ENCODE measurements at regions of chr9 and their contacts with region 1.

Region 1: DNA sequence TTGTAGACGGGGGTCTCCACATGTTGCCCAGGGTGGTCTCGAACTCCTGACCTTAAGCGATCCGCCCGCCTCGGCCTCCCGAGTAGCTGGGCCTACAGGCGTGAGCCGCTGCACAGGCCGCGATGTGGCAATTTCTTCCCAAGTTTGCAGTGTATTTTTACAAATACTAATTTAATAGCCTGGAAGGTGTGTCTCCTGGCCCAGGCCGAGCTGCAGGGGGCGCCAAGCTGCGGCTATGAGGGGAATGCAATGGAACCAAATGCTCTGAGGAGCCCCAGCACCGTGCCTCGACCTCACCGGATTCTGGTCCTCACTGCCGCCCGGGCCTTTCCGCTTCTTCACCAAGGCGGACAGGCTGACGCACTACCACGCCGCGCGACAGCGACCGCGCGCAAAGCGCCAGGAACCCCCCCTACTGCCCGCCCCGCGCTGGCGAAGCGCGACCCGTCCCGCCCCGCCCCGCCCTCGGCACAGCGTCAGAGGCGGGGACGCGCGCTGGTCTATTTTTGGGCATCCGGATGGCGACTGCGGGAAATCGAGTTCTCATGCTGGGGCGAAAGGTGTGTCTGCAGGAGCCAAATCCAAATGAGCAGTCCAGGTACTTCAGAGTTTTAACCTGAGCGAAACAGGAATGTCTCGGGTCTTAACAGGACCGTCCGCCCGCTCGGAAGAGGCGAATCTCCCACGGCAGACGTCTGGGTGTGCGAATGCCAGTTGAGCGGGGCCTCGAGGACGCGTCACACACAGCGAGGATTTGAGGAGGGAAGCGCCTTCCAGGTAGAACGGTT is 31.6 kb upstream of the PRXL2C start:
- DNase-seq: peak; percentile 85
- ATAC-seq: peak; percentile 97
- H3K4me3 Mint-ChIP-seq: peak overlapping the region; percentile 76
- H3K27ac Mint-ChIP-seq: peak overlapping the region; percentile 68
- H3K4me1 Mint-ChIP-seq: peaks cover 7% of the 10 kb centered on the region
- H3K27me3 Mint-ChIP-seq: peaks cover 15% of the 10 kb centered on the region

Region 2: DNA sequence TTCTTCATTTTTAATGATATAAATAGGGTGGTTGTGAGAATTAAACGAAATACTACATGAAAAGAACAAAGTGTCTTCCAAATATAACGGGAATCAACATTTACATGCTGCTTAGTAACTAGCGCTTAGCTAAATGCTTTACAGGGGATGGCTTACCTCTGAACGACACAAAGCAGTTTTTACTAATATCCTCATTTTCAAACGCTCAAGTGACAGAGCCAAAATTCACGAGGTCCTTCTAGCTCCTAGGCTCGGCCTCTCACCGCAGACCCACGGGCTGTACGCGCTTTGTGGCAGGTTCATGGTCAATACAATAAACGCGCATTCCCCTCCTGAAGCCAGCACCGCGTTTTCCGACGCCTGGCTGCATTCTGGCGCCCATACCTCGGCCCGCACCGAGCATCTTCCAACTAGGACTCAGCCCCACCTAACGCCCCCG is 90.7 kb after region 1 on chr9:
- CTCF ChIA-PET with region 1: interaction called, 3 read pairs
- POLR2A ChIA-PET with region 1: no interaction called
- intact Hi-C with region 1: loop called in 1 of 2 experiments (anchors 2 kb)
- DNase-seq: no peak
- ATAC-seq: no peak
- H3K4me3 Mint-ChIP-seq: peak overlapping the region; percentile 93
- H3K27ac Mint-ChIP-seq: peak overlapping the region; percentile 95
- H3K4me1 Mint-ChIP-seq: peaks cover 24% of the 10 kb centered on the region
- H3K27me3 Mint-ChIP-seq: no peaks in the 10 kb centered on the region

Measured in activated CD4-positive, alpha-beta T cell treated with anti-CD3 and anti-CD28 coated beads for 36 hours (primary cell).